AG04449 (cell line): ENCODE measurements at regions of chr5 and their contacts with region 1.

Region 1: GRCh38 chr5:113513384-113514288 is at the start of gene YTHDC2:
- DNase-seq: no peak
- H3K4me3 ChIP-seq: peak within 1 kb of the TSS; percentile 85
- CTCF ChIP-seq: peak; percentile 43

Region 2: DNA sequence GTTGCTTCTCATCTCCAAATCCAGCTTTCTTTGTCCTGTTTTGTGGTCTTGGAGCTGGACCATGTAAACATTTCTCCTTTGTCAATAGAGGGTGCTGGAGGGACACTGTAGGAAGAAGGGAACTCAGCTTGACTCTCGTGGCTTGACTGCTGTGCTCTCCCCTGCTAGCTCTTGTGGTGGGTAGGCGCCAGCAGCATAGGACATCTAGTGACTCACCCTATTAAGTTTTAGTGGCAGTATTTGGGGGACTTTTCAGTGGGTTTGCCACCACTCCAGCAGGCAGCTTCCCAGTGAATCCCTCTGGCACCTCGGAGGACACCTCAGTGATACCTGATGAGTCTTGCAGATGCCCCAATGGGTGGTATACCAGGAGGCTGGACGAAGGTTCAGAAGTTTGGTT is 176.7 kb before region 1 on chr5:
- CTCF ChIA-PET with region 1: interaction called, 13 read pairs
- POLR2A ChIA-PET with region 1: no interaction called
- DNase-seq: no peak
- H3K4me3 ChIP-seq: no peak overlapping the region
- CTCF ChIP-seq: peak; percentile 13

Region 3: GRCh38 chr5:113378959-113379541 is 134.6 kb before region 1 on chr5:
- CTCF ChIA-PET with region 1: interaction called, 99 read pairs
- POLR2A ChIA-PET with region 1: no interaction called
- DNase-seq: peak; percentile 3
- H3K4me3 ChIP-seq: no peak overlapping the region
- CTCF ChIP-seq: peak; percentile 71

Region 4: GRCh38 chr5:113384782-113385285 is 128.8 kb before region 1 on chr5:
- CTCF ChIA-PET with region 1: interaction called, 99 read pairs
- POLR2A ChIA-PET with region 1: no interaction called
- DNase-seq: no peak
- H3K4me3 ChIP-seq: no peak overlapping the region
- CTCF ChIP-seq: no peak

Region 5: GRCh38 chr5:113487781-113488644 is 25.6 kb before region 1 on chr5 and contains the start of gene MCC:
- CTCF ChIA-PET with region 1: interaction called, 12 read pairs
- POLR2A ChIA-PET with region 1: no interaction called
- DNase-seq: peak; percentile 71
- H3K4me3 ChIP-seq: peak within 1 kb of the TSS; percentile 86
- CTCF ChIP-seq: no peak

Region 6: GRCh38 chr5:113493446-113493845 is 20.2 kb before region 1 on chr5:
- CTCF ChIA-PET with region 1: interaction called, 12 read pairs
- POLR2A ChIA-PET with region 1: no interaction called
- DNase-seq: no peak
- H3K4me3 ChIP-seq: no peak overlapping the region
- CTCF ChIP-seq: no peak

Region 7: DNA sequence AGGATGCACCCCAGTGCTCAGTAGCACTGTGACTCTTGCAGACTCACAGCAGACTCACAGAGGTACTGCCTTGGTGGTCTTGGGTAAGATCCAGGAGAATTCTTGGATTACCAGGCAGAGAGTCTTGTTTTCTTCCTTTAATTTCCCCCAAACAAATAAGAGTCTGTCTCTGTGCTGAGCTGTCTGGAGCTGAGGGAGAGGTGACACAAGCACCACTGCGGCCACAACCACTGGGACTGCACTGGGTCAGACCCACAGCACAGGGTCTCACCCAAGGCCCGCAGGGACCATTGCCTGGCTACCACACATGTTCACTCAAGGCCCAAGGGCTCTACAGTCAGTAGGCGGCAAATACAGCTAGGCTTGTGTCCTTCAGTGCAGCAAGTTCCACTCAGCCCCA is 11.6 kb before region 1 on chr5:
- CTCF ChIA-PET with region 1: interaction called, 19 read pairs
- POLR2A ChIA-PET with region 1: no interaction called
- DNase-seq: no peak
- H3K4me3 ChIP-seq: no peak overlapping the region
- CTCF ChIP-seq: no peak

Region 8: GRCh38 chr5:113538313-113538712 is 24.7 kb after region 1 on chr5:
- CTCF ChIA-PET with region 1: no interaction called
- POLR2A ChIA-PET with region 1: no interaction called
- DNase-seq: no peak
- H3K4me3 ChIP-seq: no peak overlapping the region
- CTCF ChIP-seq: no peak

Region 9: GRCh38 chr5:114176356-114176755 is 662.7 kb after region 1 on chr5:
- CTCF ChIA-PET with region 1: no interaction called
- POLR2A ChIA-PET with region 1: no interaction called
- DNase-seq: peak; percentile 34
- H3K4me3 ChIP-seq: no peak overlapping the region
- CTCF ChIP-seq: no peak